H1 (cell line): ENCODE measurements at regions of chr6 and their contacts with region 1.

Region 1: DNA sequence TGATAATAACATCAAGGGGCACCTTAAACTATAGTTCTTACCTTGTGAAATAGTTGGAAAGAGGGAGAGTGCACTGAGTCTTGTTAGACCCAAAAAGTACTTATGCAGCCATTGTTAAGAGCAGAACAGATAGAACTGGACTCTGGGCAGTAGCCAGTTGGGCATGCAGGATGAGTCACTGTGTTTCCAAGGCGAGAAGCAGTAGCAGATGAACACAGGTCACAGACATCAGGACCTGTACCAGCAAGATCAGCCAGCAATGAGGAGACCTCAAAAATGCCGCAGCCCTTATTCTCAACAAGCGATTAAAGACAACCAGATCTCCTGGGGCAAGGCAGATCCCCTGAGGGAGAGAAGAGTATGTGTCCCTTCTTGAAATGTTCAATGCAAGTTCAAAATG is 79.0 kb downstream of the SAMD3 start:
- DNase-seq: no peak
- H3K4me3 ChIP-seq: no peak overlapping the region
- H3K27ac ChIP-seq: no peak overlapping the region
- H3K4me1 ChIP-seq: peaks cover 0 to 2% (median 0%) of the 10 kb centered on the region in 4 experiments; a peak in 1 of 7 replicates
- H3K27me3 ChIP-seq: no peaks in the 10 kb centered on the region
- CTCF ChIP-seq: no peak
- EP300 ChIP-seq: no peak
- POLR2A ChIP-seq: no peak
- RAD21 ChIP-seq: no peak

Region 2: GRCh38 chr6:130282234-130282995 is 138.7 kb after region 1 on chr6:
- CTCF ChIA-PET with region 1: interaction called, 11 read pairs
- POLR2A ChIA-PET with region 1: no interaction called
- DNase-seq: no peak
- H3K4me3 ChIP-seq: no peak overlapping the region
- H3K27ac ChIP-seq: no peak overlapping the region
- H3K4me1 ChIP-seq: no peaks in the 10 kb centered on the region
- H3K27me3 ChIP-seq: no peaks in the 10 kb centered on the region
- CTCF ChIP-seq: peak in 2 of 3 experiments; percentile 35 to 60; a peak in 2 of 4 replicates
- EP300 ChIP-seq: no peak
- POLR2A ChIP-seq: no peak
- RAD21 ChIP-seq: peak; percentile 59